CD8-positive, alpha-beta T cell (primary cell): ENCODE measurements at regions of chr3 and their contacts with region 1.

Region 1: DNA sequence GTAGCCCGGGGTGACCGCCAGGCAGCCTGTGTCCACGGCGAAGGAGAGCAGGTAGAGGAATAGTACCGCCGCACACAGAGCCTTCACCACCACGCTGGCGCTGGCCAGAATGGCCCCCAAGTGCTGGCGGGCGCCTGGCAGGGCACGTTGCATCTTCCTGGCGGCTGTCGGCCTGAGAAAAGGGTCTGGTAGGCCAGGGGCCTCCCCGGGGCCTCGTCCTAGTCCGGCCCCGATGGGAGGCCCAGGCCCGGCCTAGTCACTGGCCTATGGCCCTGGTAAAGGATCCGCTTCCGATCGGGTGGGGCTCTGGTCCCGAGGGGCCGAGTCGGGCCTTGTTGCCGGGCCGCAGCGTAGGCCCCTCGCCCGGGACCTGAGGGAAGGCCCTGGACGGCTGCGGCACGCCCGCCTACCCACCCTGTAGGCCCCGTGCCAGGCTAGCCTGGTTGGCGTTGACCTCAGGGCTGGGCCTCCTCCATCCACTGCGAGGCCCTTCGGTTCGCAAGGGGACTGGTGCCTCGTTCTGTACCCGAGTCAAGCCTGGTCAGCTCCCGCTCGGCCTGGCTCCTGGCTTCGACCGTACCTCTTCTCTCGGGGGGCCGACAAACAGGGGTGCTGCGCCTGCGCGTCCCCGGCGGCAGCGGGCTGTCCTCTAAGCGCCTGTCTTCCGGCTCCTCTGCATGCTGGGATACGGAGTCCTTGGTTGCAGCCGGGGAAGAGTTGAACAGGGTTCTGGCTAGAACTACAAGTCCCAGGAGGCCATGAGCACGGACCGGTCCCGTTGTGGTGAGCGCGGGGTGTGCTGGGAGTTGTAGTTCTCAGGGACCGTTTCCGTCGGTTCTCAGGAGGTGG is at the start of gene TMEM115:
- DNase-seq: peak; percentile 87 to 99 (median 94)
- ATAC-seq: peak; percentile 100
- H3K4me3 ChIP-seq: peak within 1 kb of the TSS; percentile 58 to 76
- H3K4me3 Mint-ChIP-seq: peak within 1 kb of the TSS; percentile 97
- H3K27ac ChIP-seq: peak within 1 kb of the TSS; percentile 58 to 86
- H3K27ac Mint-ChIP-seq: peak within 1 kb of the TSS; percentile 97
- H3K4me1 ChIP-seq: peaks cover 33% of the 10 kb centered on the region
- H3K4me1 Mint-ChIP-seq: peaks cover 52% of the 10 kb centered on the region
- H3K27me3 ChIP-seq: no peaks in the 10 kb centered on the region
- H3K27me3 Mint-ChIP-seq: no peaks in the 10 kb centered on the region
- CTCF ChIP-seq: no peak
- total RNA-seq, gene TMEM115: 15.2 to 17.8 TPM

Region 2: GRCh38 chr3:49021813-49022687 is 1337.1 kb before region 1 on chr3 and contains the start of gene NDUFAF3:
- CTCF ChIA-PET with region 1: no interaction called
- POLR2A ChIA-PET with region 1: no interaction called
- intact Hi-C with region 1: loop called in 1 of 2 experiments (anchors 10 kb)
- DNase-seq: peak; percentile 85 to 95 (median 93)
- ATAC-seq: peak; percentile 73
- H3K4me3 ChIP-seq: peak within 1 kb of the TSS; percentile 97 to 98
- H3K4me3 Mint-ChIP-seq: peak within 1 kb of the TSS; percentile 98
- H3K27ac ChIP-seq: peak within 1 kb of the TSS; percentile 98 to 99
- H3K27ac Mint-ChIP-seq: peak within 1 kb of the TSS; percentile 98
- H3K4me1 ChIP-seq: peaks cover 38% of the 10 kb centered on the region
- H3K4me1 Mint-ChIP-seq: peaks cover 43% of the 10 kb centered on the region
- H3K27me3 ChIP-seq: no peaks in the 10 kb centered on the region
- H3K27me3 Mint-ChIP-seq: no peaks in the 10 kb centered on the region
- CTCF ChIP-seq: peak; percentile 94
- total RNA-seq, gene NDUFAF3: 44.4 to 48.5 TPM

Region 3: GRCh38 chr3:50235716-50236496 is 123.2 kb before region 1 on chr3 and contains the start of gene GNAI2:
- CTCF ChIA-PET with region 1: no interaction called
- POLR2A ChIA-PET with region 1: no interaction called
- intact Hi-C with region 1: loop called (anchors 1 to 5 kb)
- DNase-seq: peak; percentile 98 to 99 (median 98)
- ATAC-seq: peak; percentile 85
- H3K4me3 ChIP-seq: peak within 1 kb of the TSS; percentile 94 to 100
- H3K4me3 Mint-ChIP-seq: peak within 1 kb of the TSS; percentile 96
- H3K27ac ChIP-seq: peak within 1 kb of the TSS; percentile 72 to 83
- H3K27ac Mint-ChIP-seq: peak within 1 kb of the TSS; percentile 96
- H3K4me1 ChIP-seq: peaks cover 38% of the 10 kb centered on the region
- H3K4me1 Mint-ChIP-seq: peaks cover 33% of the 10 kb centered on the region
- H3K27me3 ChIP-seq: no peaks in the 10 kb centered on the region
- H3K27me3 Mint-ChIP-seq: no peaks in the 10 kb centered on the region
- CTCF ChIP-seq: no peak
- total RNA-seq, gene GNAI2: 185 to 192 TPM

Region 4: GRCh38 chr3:50298836-50299637 is 60.1 kb before region 1 on chr3 and contains the starts of genes HYAL3 and NAA80:
- CTCF ChIA-PET with region 1: interaction called, 4 read pairs
- POLR2A ChIA-PET with region 1: interaction called, 11 read pairs
- intact Hi-C with region 1: loop called in 1 of 2 experiments (anchors 1 kb)
- DNase-seq: peak; percentile 85 to 100 (median 99)
- ATAC-seq: peak; percentile 89
- H3K4me3 ChIP-seq: peak within 1 kb of the TSS; percentile 97
- H3K4me3 Mint-ChIP-seq: peak within 1 kb of the TSS; percentile 99
- H3K27ac ChIP-seq: peak within 1 kb of the TSS; percentile 93 to 94
- H3K27ac Mint-ChIP-seq: peak within 1 kb of the TSS; percentile 99
- H3K4me1 ChIP-seq: peaks cover 25% of the 10 kb centered on the region
- H3K4me1 Mint-ChIP-seq: peaks cover 28% of the 10 kb centered on the region
- H3K27me3 ChIP-seq: no peaks in the 10 kb centered on the region
- H3K27me3 Mint-ChIP-seq: no peaks in the 10 kb centered on the region
- CTCF ChIP-seq: peak; percentile 53
- total RNA-seq, gene HYAL3: 2.1 to 3.2 TPM
- total RNA-seq, gene NAA80: 37.1 to 40.7 TPM

Region 5: DNA sequence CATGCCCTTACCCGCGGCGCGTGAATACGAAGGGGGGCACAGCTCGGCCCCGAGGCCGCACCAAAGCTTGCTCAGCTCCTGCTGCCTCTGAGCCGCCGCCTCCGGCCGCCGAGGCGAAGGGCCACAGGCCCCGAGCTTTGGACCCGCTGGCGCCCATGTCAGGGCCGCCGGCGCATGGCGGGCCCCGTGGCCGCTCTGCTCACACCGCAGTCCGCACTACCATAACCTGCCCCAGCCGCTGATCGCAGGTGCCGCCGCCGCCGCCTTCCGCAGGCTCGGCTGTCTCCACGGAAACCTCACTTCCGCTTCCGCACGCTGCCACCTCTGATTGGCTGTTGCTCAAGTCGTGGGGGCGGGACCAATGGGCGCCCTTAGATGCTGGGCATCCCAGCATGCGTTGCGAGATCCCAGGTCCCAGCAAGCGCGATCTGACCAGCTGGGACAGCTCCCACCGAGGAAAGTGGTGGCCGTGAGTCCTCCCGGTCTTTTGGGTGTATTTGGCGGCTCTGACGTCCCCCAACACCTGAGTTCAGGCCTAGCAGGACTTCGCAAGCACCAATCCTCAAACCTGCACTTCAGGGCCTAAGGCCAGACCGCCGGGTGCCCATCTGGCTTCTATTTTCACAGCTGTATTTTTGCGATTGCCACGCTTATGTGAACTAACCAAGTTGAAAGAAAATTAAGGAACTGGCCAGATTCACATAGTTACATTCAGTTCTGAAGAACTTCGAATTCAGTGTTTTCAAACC is 31.0 kb before region 1 on chr3 and contains the start of gene TUSC2:
- CTCF ChIA-PET with region 1: interaction called, 3 read pairs
- POLR2A ChIA-PET with region 1: interaction called, 129 read pairs
- intact Hi-C with region 1: loop called in 1 of 2 experiments (anchors 2 kb)
- DNase-seq: peak; percentile 85 to 98 (median 94)
- ATAC-seq: peak; percentile 96
- H3K4me3 ChIP-seq: peak within 1 kb of the TSS; percentile 78 to 89
- H3K4me3 Mint-ChIP-seq: peak within 1 kb of the TSS; percentile 94
- H3K27ac ChIP-seq: peak within 1 kb of the TSS; percentile 80 to 82
- H3K27ac Mint-ChIP-seq: peak within 1 kb of the TSS; percentile 93
- H3K4me1 ChIP-seq: peaks cover 26% of the 10 kb centered on the region
- H3K4me1 Mint-ChIP-seq: peaks cover 27% of the 10 kb centered on the region
- H3K27me3 ChIP-seq: no peaks in the 10 kb centered on the region
- H3K27me3 Mint-ChIP-seq: no peaks in the 10 kb centered on the region
- CTCF ChIP-seq: no peak
- total RNA-seq, gene TUSC2: 23.6 to 23.7 TPM

Region 6: GRCh38 chr3:51384726-51385473 is 1025.8 kb after region 1 on chr3 and contains the start of gene MANF:
- CTCF ChIA-PET with region 1: no interaction called
- POLR2A ChIA-PET with region 1: no interaction called
- intact Hi-C with region 1: loop called (anchors 2 kb)
- DNase-seq: peak; percentile 94 to 99 (median 97)
- ATAC-seq: peak; percentile 93
- H3K4me3 ChIP-seq: peak within 1 kb of the TSS; percentile 86 to 94
- H3K4me3 Mint-ChIP-seq: peak within 1 kb of the TSS; percentile 99
- H3K27ac ChIP-seq: peak within 1 kb of the TSS; percentile 90 to 93
- H3K27ac Mint-ChIP-seq: peak within 1 kb of the TSS; percentile 100
- H3K4me1 ChIP-seq: peaks cover 35% of the 10 kb centered on the region
- H3K4me1 Mint-ChIP-seq: peaks cover 44% of the 10 kb centered on the region
- H3K27me3 ChIP-seq: no peaks in the 10 kb centered on the region
- H3K27me3 Mint-ChIP-seq: no peaks in the 10 kb centered on the region
- CTCF ChIP-seq: no peak
- total RNA-seq, gene MANF: 32.2 to 35.0 TPM

Region 7: GRCh38 chr3:52278510-52279069 is 1919.5 kb after region 1 on chr3 and contains the start of gene WDR82:
- CTCF ChIA-PET with region 1: no interaction called
- POLR2A ChIA-PET with region 1: no interaction called
- intact Hi-C with region 1: loop called in 1 of 2 experiments (anchors 10 kb)
- DNase-seq: peak; percentile 94 to 99 (median 98)
- ATAC-seq: peak; percentile 77
- H3K4me3 ChIP-seq: peak within 1 kb of the TSS; percentile 65 to 95
- H3K4me3 Mint-ChIP-seq: peak within 1 kb of the TSS; percentile 94
- H3K27ac ChIP-seq: peak within 1 kb of the TSS; percentile 79 to 93
- H3K27ac Mint-ChIP-seq: peak within 1 kb of the TSS; percentile 99
- H3K4me1 ChIP-seq: peaks cover 49% of the 10 kb centered on the region
- H3K4me1 Mint-ChIP-seq: peaks cover 72% of the 10 kb centered on the region
- H3K27me3 ChIP-seq: no peaks in the 10 kb centered on the region
- H3K27me3 Mint-ChIP-seq: no peaks in the 10 kb centered on the region
- CTCF ChIP-seq: peak; percentile 36
- total RNA-seq, gene WDR82: 115 to 117 TPM